B cell (primary cell): ENCODE measurements at regions of chr13 and their contacts with region 1.

Region 1: GRCh38 chr13:41054212-41054877 is 7.0 kb upstream of the WBP4 start:
- DNase-seq: peak; percentile 72
- ATAC-seq: peak; percentile 34
- H3K4me3 ChIP-seq: peak overlapping the region in 1 of 5 experiments; percentile 38
- H3K4me3 Mint-ChIP-seq: peak overlapping the region; percentile 82
- H3K27ac ChIP-seq: peak overlapping the region in 1 of 2 donors; percentile 53
- H3K27ac Mint-ChIP-seq: peak overlapping the region; percentile 90
- H3K4me1 ChIP-seq: peaks cover 29 to 30% of the 10 kb centered on the region in 2 donors
- H3K4me1 Mint-ChIP-seq: peaks cover 64% of the 10 kb centered on the region
- H3K27me3 ChIP-seq: no peaks in the 10 kb centered on the region
- H3K27me3 Mint-ChIP-seq: no peaks in the 10 kb centered on the region
- CTCF ChIP-seq: peak; percentile 71

Region 2: GRCh38 chr13:40789275-40790133 is 264.8 kb before region 1 on chr13 and contains the start of gene SLC25A15:
- CTCF ChIA-PET with region 1: interaction called, 4 read pairs
- POLR2A ChIA-PET with region 1: no interaction called
- intact Hi-C with region 1: loop called (anchors 2 kb)
- DNase-seq: peak; percentile 82
- ATAC-seq: peak; percentile 95
- H3K4me3 ChIP-seq: peak within 1 kb of the TSS; percentile 21 to 73 (median 69)
- H3K4me3 Mint-ChIP-seq: peak within 1 kb of the TSS; percentile 84
- H3K27ac ChIP-seq: peak within 1 kb of the TSS; percentile 29 to 57
- H3K27ac Mint-ChIP-seq: peak within 1 kb of the TSS; percentile 81
- H3K4me1 ChIP-seq: peaks cover 9 to 13% of the 10 kb centered on the region in 2 donors
- H3K4me1 Mint-ChIP-seq: peaks cover 10% of the 10 kb centered on the region
- H3K27me3 ChIP-seq: no peaks in the 10 kb centered on the region
- H3K27me3 Mint-ChIP-seq: no peaks in the 10 kb centered on the region
- CTCF ChIP-seq: peak; percentile 19
- total RNA-seq, gene SLC25A15: 3.8 and 4.5 TPM in 2 replicates

Region 3: DNA sequence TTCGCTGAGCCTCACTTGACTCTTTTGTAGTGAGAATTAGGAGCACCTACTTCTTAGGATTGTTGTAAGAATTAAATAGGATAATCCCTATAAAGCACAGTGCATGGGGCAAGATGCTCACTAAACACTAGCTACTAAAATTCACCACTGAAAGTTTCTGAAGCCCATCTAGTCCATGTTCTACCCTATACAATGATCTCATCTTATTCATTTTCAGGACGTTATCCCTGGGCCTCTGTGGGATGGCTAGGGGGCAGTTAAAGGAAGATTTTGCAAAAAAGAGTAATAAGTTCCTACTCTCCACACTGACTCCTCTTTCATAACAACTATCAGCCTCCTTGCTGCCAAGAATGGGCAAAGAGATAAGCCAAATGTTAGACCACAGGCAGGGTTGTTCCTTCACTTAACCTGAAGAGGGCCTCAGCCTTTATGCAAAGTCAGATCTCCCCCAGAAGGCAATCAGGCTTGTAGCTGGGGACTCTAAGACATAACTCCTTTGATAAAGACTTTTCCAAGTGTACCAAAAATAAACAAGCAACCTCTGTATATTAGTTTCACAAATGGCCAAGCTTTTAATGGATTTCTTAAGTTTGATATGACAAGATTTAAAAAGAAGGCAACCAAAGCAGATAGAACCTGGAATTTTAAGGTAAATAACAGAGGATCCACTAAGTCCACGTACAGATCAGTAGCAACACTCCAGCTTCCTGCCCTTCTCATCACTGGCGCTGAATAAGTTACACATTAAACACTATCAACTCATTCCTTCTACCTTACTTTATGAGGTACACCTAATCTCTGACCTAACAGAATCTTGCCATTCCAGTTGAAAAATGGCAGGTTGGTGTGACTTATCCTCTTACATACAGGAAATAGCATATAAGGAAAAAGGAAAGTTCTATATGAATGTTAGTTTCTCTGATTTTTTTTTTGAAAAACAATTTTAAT is 79.6 kb before region 1 on chr13:
- CTCF ChIA-PET with region 1: interaction called, 44 read pairs
- POLR2A ChIA-PET with region 1: interaction called, 3 read pairs
- intact Hi-C with region 1: no loop called
- DNase-seq: peak; percentile 71
- ATAC-seq: peak; percentile 87
- H3K4me3 ChIP-seq: peak overlapping the region in 1 of 5 experiments; percentile 30
- H3K4me3 Mint-ChIP-seq: peak overlapping the region; percentile 51
- H3K27ac ChIP-seq: peak overlapping the region in 1 of 2 donors; percentile 54
- H3K27ac Mint-ChIP-seq: peak overlapping the region; percentile 57
- H3K4me1 ChIP-seq: peaks cover 70 to 92% of the 10 kb centered on the region in 2 donors
- H3K4me1 Mint-ChIP-seq: peaks cover 90% of the 10 kb centered on the region
- H3K27me3 ChIP-seq: no peaks in the 10 kb centered on the region
- H3K27me3 Mint-ChIP-seq: no peaks in the 10 kb centered on the region
- CTCF ChIP-seq: peak; percentile 72

Region 4: DNA sequence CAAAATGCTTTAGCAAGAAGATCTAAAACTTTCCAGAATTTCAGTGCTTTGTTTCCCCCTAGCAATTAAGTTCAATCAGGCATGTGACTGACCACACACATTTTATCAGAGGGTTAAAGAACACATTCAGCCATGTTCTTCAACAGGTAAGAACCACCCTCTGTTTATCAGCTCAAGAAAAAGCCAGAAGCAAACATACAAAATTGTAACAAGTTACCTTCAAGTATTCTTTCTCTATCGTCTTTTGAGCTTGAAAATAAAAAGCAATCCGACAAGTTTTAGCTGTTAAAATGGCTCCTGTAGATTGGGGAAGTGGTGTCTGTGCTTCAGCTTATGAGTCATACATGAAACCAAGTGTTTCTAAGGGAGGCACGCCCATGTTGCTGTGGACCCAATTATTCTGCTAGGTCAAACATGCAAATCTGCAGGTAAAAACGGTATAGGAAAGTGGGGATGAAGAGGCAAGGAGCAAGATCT is 35.3 kb before region 1 on chr13 and contains the start of gene ELF1:
- CTCF ChIA-PET with region 1: interaction called, 63 read pairs
- POLR2A ChIA-PET with region 1: interaction called, 32 read pairs
- intact Hi-C with region 1: loop called (anchors 1 kb)
- DNase-seq: peak; percentile 91
- ATAC-seq: peak; percentile 89
- H3K4me3 ChIP-seq: peak within 1 kb of the TSS; percentile 65 to 99 (median 75)
- H3K4me3 Mint-ChIP-seq: peak within 1 kb of the TSS; percentile 94
- H3K27ac ChIP-seq: peak within 1 kb of the TSS; percentile 96 to 100
- H3K27ac Mint-ChIP-seq: peak within 1 kb of the TSS; percentile 98
- H3K4me1 ChIP-seq: peaks cover 29 to 33% of the 10 kb centered on the region in 2 donors
- H3K4me1 Mint-ChIP-seq: peaks cover 52% of the 10 kb centered on the region
- H3K27me3 ChIP-seq: no peaks in the 10 kb centered on the region
- H3K27me3 Mint-ChIP-seq: no peaks in the 10 kb centered on the region
- CTCF ChIP-seq: no peak
- total RNA-seq, gene ELF1: 185 and 186 TPM in 2 replicates

Region 5: GRCh38 chr13:41099986-41100385 is 45.6 kb after region 1 on chr13:
- CTCF ChIA-PET with region 1: no interaction called
- POLR2A ChIA-PET with region 1: no interaction called
- intact Hi-C with region 1: no loop called
- DNase-seq: no peak
- ATAC-seq: no peak
- H3K4me3 ChIP-seq: no peak overlapping the region
- H3K4me3 Mint-ChIP-seq: no peak overlapping the region
- H3K27ac ChIP-seq: no peak overlapping the region
- H3K27ac Mint-ChIP-seq: no peak overlapping the region
- H3K4me1 ChIP-seq: no peaks in the 10 kb centered on the region
- H3K4me1 Mint-ChIP-seq: no peaks in the 10 kb centered on the region
- H3K27me3 ChIP-seq: no peaks in the 10 kb centered on the region
- H3K27me3 Mint-ChIP-seq: peaks cover 2% of the 10 kb centered on the region
- CTCF ChIP-seq: no peak

Region 6: GRCh38 chr13:41111454-41111853 is 57.1 kb after region 1 on chr13:
- CTCF ChIA-PET with region 1: no interaction called
- POLR2A ChIA-PET with region 1: no interaction called
- intact Hi-C with region 1: no loop called
- DNase-seq: no peak
- ATAC-seq: no peak
- H3K4me3 ChIP-seq: no peak overlapping the region
- H3K4me3 Mint-ChIP-seq: no peak overlapping the region
- H3K27ac ChIP-seq: no peak overlapping the region
- H3K27ac Mint-ChIP-seq: no peak overlapping the region
- H3K4me1 ChIP-seq: no peaks in the 10 kb centered on the region
- H3K4me1 Mint-ChIP-seq: no peaks in the 10 kb centered on the region
- H3K27me3 ChIP-seq: no peaks in the 10 kb centered on the region
- H3K27me3 Mint-ChIP-seq: no peaks in the 10 kb centered on the region
- CTCF ChIP-seq: no peak

Region 7: GRCh38 chr13:41222259-41222852 is 168.0 kb after region 1 on chr13:
- CTCF ChIA-PET with region 1: interaction called, 31 read pairs
- POLR2A ChIA-PET with region 1: no interaction called
- intact Hi-C with region 1: no loop called
- DNase-seq: peak; percentile 78
- ATAC-seq: peak; percentile 99
- H3K4me3 ChIP-seq: no peak overlapping the region
- H3K4me3 Mint-ChIP-seq: no peak overlapping the region
- H3K27ac ChIP-seq: no peak overlapping the region
- H3K27ac Mint-ChIP-seq: no peak overlapping the region
- H3K4me1 ChIP-seq: peaks cover 0 to 6% of the 10 kb centered on the region in 2 donors
- H3K4me1 Mint-ChIP-seq: peaks cover 3% of the 10 kb centered on the region
- H3K27me3 ChIP-seq: no peaks in the 10 kb centered on the region
- H3K27me3 Mint-ChIP-seq: no peaks in the 10 kb centered on the region
- CTCF ChIP-seq: peak; percentile 85